ENCODE measurements at regions of chr3 and their contacts with region 1.

Region 1: GRCh38 chr3:192130534-192131132 is 596.7 kb downstream of the FGF12 start:
- DNase-seq: no peak

Region 2: DNA sequence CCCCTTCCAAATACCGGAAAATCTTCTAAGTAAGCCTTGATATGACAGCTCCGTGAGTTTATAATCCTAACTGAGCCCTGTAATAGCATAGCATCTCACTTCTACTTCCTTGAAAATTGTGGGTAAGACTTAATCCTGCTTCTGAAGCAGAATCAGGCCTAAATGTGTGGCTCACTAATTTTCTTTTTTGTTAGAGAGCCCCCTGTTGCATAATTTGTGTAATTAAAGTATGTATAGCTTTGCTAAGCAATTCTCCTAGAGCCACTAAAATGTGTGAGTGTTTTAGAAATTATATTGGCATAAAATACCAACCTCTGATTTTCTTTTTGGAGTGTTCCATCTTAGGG is 292.3 kb after region 1 on chr3:
- intact Hi-C with region 1: loop called (anchors 10 kb)
- DNase-seq: no peak